Naive thymus-derived CD4-positive, alpha-beta T cell (primary cell): ENCODE measurements at regions of chr16 and their contacts with region 1.

Region 1: DNA sequence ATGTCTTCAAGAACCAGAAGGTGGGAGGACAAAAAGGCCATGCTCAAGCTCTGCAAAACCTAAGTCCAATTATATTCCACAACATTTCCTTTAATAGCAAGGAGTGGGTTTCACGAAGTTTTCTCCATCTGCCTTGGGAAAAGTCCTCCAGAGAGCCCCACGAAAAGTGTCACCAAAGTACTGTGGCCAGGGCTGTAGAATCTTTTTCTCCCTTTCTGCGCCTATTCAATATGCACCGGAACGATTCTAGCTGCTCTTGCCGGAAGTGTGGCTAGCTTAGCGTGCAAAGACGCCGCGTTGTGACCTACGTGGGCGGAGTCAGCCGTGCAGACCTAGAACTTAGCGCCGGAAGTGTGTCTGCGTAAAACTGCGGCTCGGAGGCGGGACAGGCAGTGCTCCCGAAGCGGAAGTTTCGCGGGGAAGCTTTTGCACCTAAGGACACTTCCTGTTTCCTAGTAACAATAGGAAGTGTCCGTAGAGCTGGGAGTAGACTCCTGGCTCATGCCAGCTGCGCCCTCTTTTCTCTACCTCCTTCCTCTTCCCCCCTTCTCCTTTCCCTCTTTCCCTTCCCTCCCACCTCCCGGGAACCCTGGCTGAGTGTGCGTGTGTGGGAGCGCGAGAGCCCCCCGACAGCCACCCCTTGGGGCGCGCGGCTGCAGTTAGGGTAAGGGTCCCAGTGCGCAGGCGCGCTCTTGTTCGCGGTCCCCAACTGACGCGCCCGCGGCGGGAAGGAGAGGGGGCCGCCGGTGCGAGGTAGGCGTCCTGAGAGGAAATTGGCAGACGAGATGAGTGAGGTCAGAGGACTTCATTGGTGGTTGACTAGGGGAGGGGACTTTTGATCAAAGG is at the starts of genes ZNF646 and ZNF668:
- DNase-seq: peak; percentile 84 to 99 (median 96)
- ATAC-seq: peak; percentile 90
- H3K4me3 ChIP-seq: peak within 1 kb of the TSS; percentile 89
- H3K4me3 Mint-ChIP-seq: peak within 1 kb of the TSS; percentile 85 to 99 (median 96)
- H3K27ac ChIP-seq: peak within 1 kb of the TSS; percentile 91
- H3K27ac Mint-ChIP-seq: peak within 1 kb of the TSS; percentile 92 to 98 (median 97)
- H3K4me1 ChIP-seq: peaks cover 9 to 18% of the 10 kb centered on the region in 2 donors
- H3K4me1 Mint-ChIP-seq: peaks cover 32 to 48% (median 36%) of the 10 kb centered on the region in 7 donors
- H3K27me3 ChIP-seq: no peaks in the 10 kb centered on the region
- H3K27me3 Mint-ChIP-seq: no peaks in the 10 kb centered on the region
- total RNA-seq, gene ZNF646: 22.2 to 49.1 (median 30.4) TPM
- total RNA-seq, gene ZNF668: 10.7 to 15.2 (median 12.6) TPM

Region 2: DNA sequence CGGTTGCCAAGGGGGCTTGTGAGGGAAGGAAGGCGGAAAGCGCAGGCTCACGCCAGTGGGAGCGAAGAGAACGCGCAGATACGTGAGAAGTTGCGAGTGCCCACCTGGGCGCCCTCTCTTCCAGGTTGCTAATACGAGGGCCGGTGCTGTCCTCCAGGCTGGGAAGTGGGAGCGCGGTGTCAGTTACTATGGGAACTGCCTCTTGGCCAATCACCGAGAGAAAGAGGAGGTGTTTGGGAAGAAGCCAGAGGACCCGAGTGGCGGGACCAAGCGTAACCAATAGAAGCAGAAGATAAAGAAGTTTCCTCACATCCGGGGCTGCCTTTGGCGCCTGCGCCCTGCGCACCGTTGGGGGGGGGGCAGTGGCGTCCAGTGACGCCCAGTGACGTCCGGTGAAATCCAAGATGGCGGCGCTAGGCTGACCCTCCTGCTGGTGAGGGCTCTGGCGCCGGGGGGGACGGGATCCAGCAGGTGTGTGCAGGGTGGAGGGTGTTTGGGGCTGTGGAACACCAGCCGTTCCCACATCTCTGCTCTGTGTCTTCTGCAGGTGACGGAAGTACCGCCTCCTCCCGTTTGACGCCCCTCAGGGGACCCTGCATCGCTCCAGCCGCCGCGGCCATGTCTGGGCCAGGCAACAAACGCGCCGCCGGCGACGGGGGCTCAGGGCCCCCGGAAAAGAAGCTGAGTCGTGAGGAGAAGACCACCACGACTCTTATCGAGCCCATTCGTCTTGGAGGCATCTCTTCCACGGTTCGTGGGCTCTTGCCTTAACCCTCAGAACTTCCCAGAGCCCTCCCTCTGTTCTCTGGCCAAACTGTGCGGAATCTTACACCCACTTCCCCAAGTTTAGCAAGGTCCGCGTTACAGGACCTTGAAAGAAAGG is 312.0 kb before region 1 on chr16 and contains the starts of genes CFAP119 and RNF40:
- CTCF ChIA-PET with region 1: no interaction called
- POLR2A ChIA-PET with region 1: no interaction called
- intact Hi-C with region 1: loop called in 1 of 2 experiments (anchors 1 kb)
- DNase-seq: peak; percentile 73 to 97 (median 88)
- ATAC-seq: peak; percentile 96
- H3K4me3 ChIP-seq: peak within 1 kb of the TSS; percentile 99
- H3K4me3 Mint-ChIP-seq: peak within 1 kb of the TSS; percentile 96 to 98 (median 97)
- H3K27ac ChIP-seq: peak within 1 kb of the TSS; percentile 88
- H3K27ac Mint-ChIP-seq: peak within 1 kb of the TSS; percentile 82 to 96 (median 93)
- H3K4me1 ChIP-seq: peaks cover 17 to 31% of the 10 kb centered on the region in 2 donors
- H3K4me1 Mint-ChIP-seq: peaks cover 21 to 41% (median 32%) of the 10 kb centered on the region in 7 donors
- H3K27me3 ChIP-seq: no peaks in the 10 kb centered on the region
- H3K27me3 Mint-ChIP-seq: no peaks in the 10 kb centered on the region
- total RNA-seq, gene CFAP119: 2.3 to 5.9 (median 2.9) TPM
- total RNA-seq, gene RNF40: 68.7 to 122 (median 114) TPM

Region 3: DNA sequence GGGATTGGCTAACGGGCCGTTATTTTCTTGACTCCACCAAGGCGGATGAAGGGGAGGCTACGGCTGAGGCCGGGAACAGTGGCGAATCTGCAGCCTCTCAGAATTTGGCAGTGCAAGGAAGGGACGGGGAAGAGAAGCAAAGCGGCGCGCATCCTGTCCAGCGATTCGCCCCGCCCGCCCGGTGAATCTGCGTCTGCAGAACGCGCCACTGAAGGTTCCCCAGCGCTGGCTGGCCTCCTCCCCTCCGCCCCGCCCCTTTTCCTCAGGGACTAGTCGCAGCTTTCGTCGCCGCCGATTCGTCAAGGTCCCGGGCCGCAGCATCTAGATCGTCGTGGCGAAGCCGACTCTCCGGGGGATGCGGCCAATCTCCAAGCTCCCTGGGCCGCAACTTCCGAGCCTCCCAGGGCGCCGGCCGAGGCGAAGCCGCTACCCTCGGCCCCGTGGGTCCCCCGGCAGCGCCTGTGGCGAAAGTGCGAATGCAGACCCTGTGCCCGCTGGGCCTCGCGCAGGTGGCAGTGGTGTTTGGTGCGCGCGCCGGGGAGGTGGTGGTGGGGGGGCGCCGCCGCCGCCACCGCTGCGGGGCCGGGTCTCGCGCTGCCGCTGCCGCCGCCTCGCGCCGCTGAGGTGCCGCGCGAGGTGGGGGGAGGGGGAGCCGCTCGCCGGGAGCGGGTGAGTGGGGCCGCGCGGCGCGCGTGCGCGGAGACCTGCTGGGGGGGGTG is 116.6 kb before region 1 on chr16 and contains the start of gene SETD1A:
- CTCF ChIA-PET with region 1: no interaction called
- POLR2A ChIA-PET with region 1: interaction called, 7 read pairs
- intact Hi-C with region 1: loop called (anchors 1 kb)
- DNase-seq: peak; percentile 94 to 99 (median 97)
- ATAC-seq: peak; percentile 93
- H3K4me3 ChIP-seq: peak within 1 kb of the TSS; percentile 100
- H3K4me3 Mint-ChIP-seq: peak within 1 kb of the TSS; percentile 81 to 97 (median 96)
- H3K27ac ChIP-seq: peak within 1 kb of the TSS; percentile 93
- H3K27ac Mint-ChIP-seq: peak within 1 kb of the TSS; percentile 97 to 100 (median 98)
- H3K4me1 ChIP-seq: peaks cover 16 to 22% of the 10 kb centered on the region in 2 donors
- H3K4me1 Mint-ChIP-seq: peaks cover 23 to 46% (median 29%) of the 10 kb centered on the region in 7 donors
- H3K27me3 ChIP-seq: no peaks in the 10 kb centered on the region
- H3K27me3 Mint-ChIP-seq: peaks cover 0 to 3% (median 0%) of the 10 kb centered on the region in 5 donors
- total RNA-seq, gene SETD1A: 27.0 to 47.2 (median 36.8) TPM

Region 4: GRCh38 chr16:31094424-31095120 is 20.4 kb after region 1 on chr16 and contains the start of gene VKORC1:
- CTCF ChIA-PET with region 1: no interaction called
- POLR2A ChIA-PET with region 1: interaction called, 35 read pairs
- intact Hi-C with region 1: loop called (anchors 1 kb)
- DNase-seq: peak; percentile 66 to 89 (median 88)
- ATAC-seq: peak; percentile 93
- H3K4me3 ChIP-seq: peak within 1 kb of the TSS; percentile 99
- H3K4me3 Mint-ChIP-seq: peak within 1 kb of the TSS; percentile 92 to 99 (median 94)
- H3K27ac ChIP-seq: peak within 1 kb of the TSS; percentile 85
- H3K27ac Mint-ChIP-seq: peak within 1 kb of the TSS; percentile 67 to 95 (median 91)
- H3K4me1 ChIP-seq: peaks cover 14 to 18% of the 10 kb centered on the region in 2 donors
- H3K4me1 Mint-ChIP-seq: peaks cover 14 to 42% (median 29%) of the 10 kb centered on the region in 7 donors
- H3K27me3 ChIP-seq: no peaks in the 10 kb centered on the region
- H3K27me3 Mint-ChIP-seq: no peaks in the 10 kb centered on the region
- total RNA-seq, gene VKORC1: 29.5 to 69.3 (median 35.6) TPM

Region 5: GRCh38 chr16:31142109-31143010 is 68.2 kb after region 1 on chr16:
- CTCF ChIA-PET with region 1: interaction called, 10 read pairs
- POLR2A ChIA-PET with region 1: interaction called, 23 read pairs
- intact Hi-C with region 1: loop called (anchors 1 kb)
- DNase-seq: peak; percentile 91 to 98 (median 95)
- ATAC-seq: peak; percentile 95
- H3K4me3 ChIP-seq: peak overlapping the region; percentile 68
- H3K4me3 Mint-ChIP-seq: peak overlapping the region; percentile 61 to 84 (median 72)
- H3K27ac ChIP-seq: peak overlapping the region; percentile 74
- H3K27ac Mint-ChIP-seq: peak overlapping the region; percentile 73 to 94 (median 84)
- H3K4me1 ChIP-seq: peaks cover 6 to 14% of the 10 kb centered on the region in 2 donors
- H3K4me1 Mint-ChIP-seq: peaks cover 0 to 17% (median 14%) of the 10 kb centered on the region in 7 donors
- H3K27me3 ChIP-seq: no peaks in the 10 kb centered on the region
- H3K27me3 Mint-ChIP-seq: peaks cover 0 to 3% (median 0%) of the 10 kb centered on the region in 5 donors

Region 6: DNA sequence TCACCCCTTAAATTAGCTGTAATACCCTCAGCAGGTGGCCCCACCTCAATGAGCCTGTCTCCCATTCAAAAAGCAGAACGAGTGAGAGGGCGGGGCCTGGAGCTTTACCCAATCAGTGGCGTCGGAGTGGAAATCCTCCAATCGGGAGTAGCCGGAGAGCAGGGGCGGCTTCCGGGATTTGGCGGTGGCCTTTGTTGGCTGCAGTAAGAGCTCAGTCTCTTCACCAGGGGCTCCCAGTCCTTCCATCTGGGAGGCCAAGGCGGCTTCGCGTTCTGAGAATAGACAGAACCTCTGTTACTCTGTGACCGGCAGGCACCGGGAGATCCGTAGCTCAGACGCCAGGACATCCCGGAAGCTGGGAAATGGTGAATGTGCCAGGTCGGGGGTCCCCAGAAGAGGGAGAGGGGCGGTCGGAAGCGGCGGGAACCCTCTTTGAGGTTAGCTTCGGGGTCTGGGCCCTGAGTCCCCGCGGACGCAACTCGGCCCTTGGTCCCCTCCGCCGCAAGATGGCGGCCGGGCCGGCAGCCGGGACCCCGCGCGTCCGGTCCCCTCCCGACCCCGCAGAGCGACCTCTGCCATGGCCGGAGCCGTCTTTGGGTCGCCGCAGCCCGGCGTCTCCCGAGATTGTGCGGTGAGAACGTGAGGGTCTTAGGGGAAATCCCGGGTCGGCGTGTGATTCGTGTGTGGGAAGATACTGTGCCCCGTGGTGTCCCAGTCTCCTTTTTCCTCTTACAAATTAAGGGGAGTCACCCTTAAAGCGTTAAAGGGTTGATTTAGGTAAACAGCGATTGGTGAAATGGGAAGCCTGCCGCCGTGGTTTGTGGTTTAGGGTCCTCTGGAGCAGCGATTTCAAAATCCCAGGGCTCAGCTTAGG is 639.1 kb after region 1 on chr16:
- CTCF ChIA-PET with region 1: no interaction called
- POLR2A ChIA-PET with region 1: no interaction called
- intact Hi-C with region 1: loop called in 1 of 2 experiments (anchors 5 kb)
- DNase-seq: peak; percentile 74 to 91 (median 87)
- ATAC-seq: peak; percentile 88
- H3K4me3 ChIP-seq: peak overlapping the region; percentile 98
- H3K4me3 Mint-ChIP-seq: peak overlapping the region; percentile 78 to 100 (median 99)
- H3K27ac ChIP-seq: peak overlapping the region; percentile 88
- H3K27ac Mint-ChIP-seq: peak overlapping the region; percentile 97 to 100 (median 98)
- H3K4me1 ChIP-seq: peaks cover 15 to 34% of the 10 kb centered on the region in 2 donors
- H3K4me1 Mint-ChIP-seq: peaks cover 34 to 68% (median 62%) of the 10 kb centered on the region in 7 donors
- H3K27me3 ChIP-seq: no peaks in the 10 kb centered on the region
- H3K27me3 Mint-ChIP-seq: no peaks in the 10 kb centered on the region